ENCODE measurements at regions of chr1 and their contacts with region 1.

Region 1: GRCh38 chr1:1059494-1060280 is 14.4 kb downstream of the RNF223 start:
- DNase-seq: peak; percentile 97
- ATAC-seq: peak; percentile 59
- H3K4me3 Mint-ChIP-seq: peak overlapping the region; percentile 74
- H3K27ac Mint-ChIP-seq: peak overlapping the region; percentile 12
- H3K4me1 Mint-ChIP-seq: peaks cover 43% of the 10 kb centered on the region
- H3K27me3 Mint-ChIP-seq: peaks cover 18% of the 10 kb centered on the region
- CTCF ChIP-seq: no peak

Region 2: GRCh38 chr1:1013105-1013921 is 46.4 kb before region 1 on chr1 and contains the start of gene ISG15:
- CTCF ChIA-PET with region 1: interaction called, 5 read pairs
- POLR2A ChIA-PET with region 1: interaction called, 20 read pairs
- intact Hi-C with region 1: no loop called
- DNase-seq: peak; percentile 77
- ATAC-seq: peak; percentile 94
- H3K4me3 Mint-ChIP-seq: peak within 1 kb of the TSS; percentile 98
- H3K27ac Mint-ChIP-seq: peak within 1 kb of the TSS; percentile 97
- H3K4me1 Mint-ChIP-seq: peaks cover 30% of the 10 kb centered on the region
- H3K27me3 Mint-ChIP-seq: peaks cover 5% of the 10 kb centered on the region
- CTCF ChIP-seq: no peak
- total RNA-seq, gene ISG15: 25.8 and 28.9 TPM in 2 replicates

Region 3: DNA sequence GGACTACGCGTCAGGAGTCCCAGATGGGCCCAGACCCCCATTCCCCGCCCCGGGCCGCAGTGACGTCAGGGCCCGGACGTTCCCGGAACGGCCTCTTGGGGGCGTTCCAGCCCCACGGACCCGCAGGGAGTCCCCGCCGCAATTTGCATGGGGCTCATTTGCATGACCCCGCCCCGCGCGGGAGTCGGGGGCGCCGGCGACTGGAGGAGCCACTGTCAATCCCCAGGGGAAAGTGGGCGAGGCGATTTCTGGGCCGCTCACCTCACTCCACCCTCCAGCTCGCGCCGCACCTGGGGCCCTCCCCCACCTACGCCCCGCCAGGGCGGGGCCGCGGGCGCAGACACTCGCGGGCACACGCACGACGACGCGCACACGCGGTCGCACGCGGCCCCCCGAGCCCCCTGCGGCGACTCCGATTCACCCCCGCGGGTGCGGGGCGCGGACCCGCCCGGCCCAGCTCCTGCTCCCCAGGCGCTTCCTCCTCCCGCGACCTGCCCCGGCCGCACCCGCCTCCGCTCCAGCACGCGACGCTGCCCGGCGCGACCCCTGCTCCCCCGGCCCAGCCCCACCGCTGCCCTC is 26.6 kb before region 1 on chr1:
- CTCF ChIA-PET with region 1: interaction called, 34 read pairs
- POLR2A ChIA-PET with region 1: interaction called, 159 read pairs
- intact Hi-C with region 1: loop called (anchors 1 kb)
- DNase-seq: peak; percentile 97
- ATAC-seq: peak; percentile 96
- H3K4me3 Mint-ChIP-seq: peak overlapping the region; percentile 72
- H3K27ac Mint-ChIP-seq: peak overlapping the region; percentile 24
- H3K4me1 Mint-ChIP-seq: peaks cover 19% of the 10 kb centered on the region
- H3K27me3 Mint-ChIP-seq: no peaks in the 10 kb centered on the region
- CTCF ChIP-seq: peak; percentile 67

Region 4: GRCh38 chr1:1079408-1080121 is 19.9 kb after region 1 on chr1:
- CTCF ChIA-PET with region 1: no interaction called
- POLR2A ChIA-PET with region 1: interaction called, 14 read pairs
- intact Hi-C with region 1: loop called (anchors 1 kb)
- DNase-seq: peak; percentile 44
- ATAC-seq: peak; percentile 75
- H3K4me3 Mint-ChIP-seq: peak overlapping the region; percentile 50
- H3K27ac Mint-ChIP-seq: no peak overlapping the region
- H3K4me1 Mint-ChIP-seq: peaks cover 7% of the 10 kb centered on the region
- H3K27me3 Mint-ChIP-seq: peaks cover 2% of the 10 kb centered on the region
- CTCF ChIP-seq: no peak

Region 5: DNA sequence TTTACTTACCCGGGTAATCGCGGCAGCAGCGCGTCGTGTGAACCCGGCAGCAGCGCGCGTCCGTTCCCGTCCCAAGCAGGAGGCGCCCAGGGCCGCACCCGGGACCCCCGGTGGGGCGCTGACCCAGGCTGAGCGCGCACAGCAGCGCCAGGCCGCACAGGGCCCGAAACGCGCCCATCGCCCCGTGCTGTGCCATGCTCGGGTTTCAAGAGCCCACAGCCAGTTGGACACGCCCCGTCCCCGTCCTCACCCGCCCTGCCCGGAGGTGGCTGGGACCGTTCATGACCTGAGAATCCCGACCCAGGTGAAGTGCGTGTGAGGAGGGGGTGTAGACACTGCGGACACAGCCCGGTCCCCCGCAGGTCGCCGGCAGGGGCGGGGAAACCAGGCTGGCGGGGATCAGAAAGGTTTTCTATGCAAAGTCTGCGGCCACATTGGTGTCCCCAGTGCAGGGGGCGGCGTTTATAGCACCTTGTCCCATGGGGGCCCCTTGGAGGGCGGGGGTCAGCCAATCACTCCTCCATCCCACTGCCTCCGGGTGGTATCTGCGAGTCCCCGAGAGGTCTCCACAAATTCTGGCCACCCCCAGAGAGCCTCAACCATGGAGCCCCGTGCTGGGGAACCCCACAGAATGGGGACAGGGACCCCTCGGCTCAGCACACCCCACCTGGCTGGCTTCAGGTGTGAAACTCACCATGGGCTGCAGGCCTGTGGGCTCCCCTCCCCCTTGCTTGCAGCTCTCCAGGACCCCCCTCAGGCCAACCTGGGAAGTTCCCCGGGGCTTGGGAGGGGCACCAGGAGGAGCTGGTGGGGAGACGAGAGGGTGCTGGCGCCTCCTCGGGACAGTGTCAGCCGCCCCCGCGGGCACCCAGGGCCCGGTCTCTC is 146.9 kb after region 1 on chr1 and contains the start of gene TNFRSF18:
- CTCF ChIA-PET with region 1: no interaction called
- POLR2A ChIA-PET with region 1: interaction called, 4 read pairs
- intact Hi-C with region 1: loop called (anchors 2 kb)
- DNase-seq: peak; percentile 66
- ATAC-seq: peak; percentile 55
- H3K4me3 Mint-ChIP-seq: peak within 1 kb of the TSS; percentile 81
- H3K27ac Mint-ChIP-seq: peak within 1 kb of the TSS; percentile 46
- H3K4me1 Mint-ChIP-seq: peaks cover 35% of the 10 kb centered on the region
- H3K27me3 Mint-ChIP-seq: peaks cover 2% of the 10 kb centered on the region
- CTCF ChIP-seq: no peak
- total RNA-seq, gene TNFRSF18: 36.7 and 37.5 TPM in 2 replicates